ENCODE measurements at regions of chr2 and their contacts with region 1.

Region 1: DNA sequence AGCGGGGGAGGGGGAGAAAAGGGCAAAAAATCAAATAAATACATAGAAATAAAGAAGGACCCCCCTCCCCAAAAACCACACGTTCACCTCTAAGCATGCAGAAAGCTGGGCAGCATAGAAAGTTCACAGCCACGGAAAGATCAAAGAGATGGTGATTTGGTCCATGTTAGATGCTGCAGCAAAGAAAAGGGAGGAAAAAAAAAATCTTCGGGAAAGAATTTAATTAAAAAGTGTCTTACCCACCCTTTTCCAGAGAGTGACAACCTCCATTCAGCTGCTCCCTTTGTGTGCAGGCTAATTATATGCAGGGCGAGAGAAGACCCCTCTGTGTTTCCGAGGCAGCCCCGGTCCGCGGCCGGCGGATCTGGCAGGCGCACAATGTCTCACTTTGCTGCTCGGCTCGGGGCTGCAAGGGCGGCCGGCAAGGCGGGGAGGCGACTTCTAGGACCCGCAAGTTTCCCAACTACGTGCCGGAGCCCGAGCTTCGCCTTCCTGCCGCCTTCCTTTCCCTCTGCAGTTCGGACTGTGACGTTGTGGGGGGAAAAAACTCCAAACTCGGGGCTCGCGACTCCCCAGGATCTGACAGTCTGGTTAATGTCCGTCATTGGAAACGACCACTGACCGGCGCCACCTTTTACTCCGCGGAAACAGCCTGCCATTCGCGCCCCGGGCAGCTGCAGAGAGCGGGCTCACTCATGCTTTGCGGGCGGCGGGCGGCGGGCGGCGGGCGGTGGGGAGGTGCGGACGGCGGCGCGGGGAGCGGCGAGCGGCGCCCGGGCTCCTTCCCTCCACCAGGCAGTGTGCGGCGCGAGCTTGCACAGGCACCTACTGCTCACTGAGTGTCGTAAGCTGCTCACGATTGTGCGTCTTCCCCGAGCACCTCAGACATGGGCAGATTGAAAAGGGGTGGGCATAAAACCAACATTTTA is at the start of gene LRRTM1:
- DNase-seq: no peak
- H3K4me3 ChIP-seq: no peak within 1 kb of the TSS
- H3K27ac ChIP-seq: no peak within 1 kb of the TSS
- H3K4me1 ChIP-seq: no peaks in the 10 kb centered on the region
- H3K27me3 ChIP-seq: no peaks in the 10 kb centered on the region
- CTCF ChIP-seq: no peak
- EP300 ChIP-seq: no peak
- POLR2A ChIP-seq: no peak
- total RNA-seq, gene LRRTM1: 0.25 to 0.66 (median 0.46) TPM in 5 of 7 donors, not detected in the others

Region 2: DNA sequence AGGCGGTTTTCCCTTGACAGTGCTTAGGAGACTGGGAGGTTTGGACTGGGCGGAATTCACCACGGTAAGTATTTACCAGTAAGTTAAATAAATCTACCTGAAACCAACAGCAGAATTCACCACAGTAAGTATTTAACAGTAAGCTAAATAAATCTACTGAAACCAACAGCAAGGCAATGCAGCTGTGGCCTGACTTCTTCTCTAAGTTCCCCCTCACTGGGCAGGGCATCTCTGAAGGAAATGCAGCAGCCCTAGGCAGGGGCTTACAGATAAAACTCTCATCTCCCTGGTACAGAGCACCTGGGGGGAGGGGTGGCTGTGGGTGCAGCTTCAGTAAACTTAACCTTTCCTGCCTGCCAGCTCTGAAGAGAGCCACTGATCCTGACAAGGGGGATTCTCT is 432.9 kb after region 1 on chr2:
- intact Hi-C with region 1: loop called in 1 of 4 experiments (anchors 5 kb)
- DNase-seq: no peak
- H3K4me3 ChIP-seq: no peak overlapping the region
- H3K27ac ChIP-seq: no peak overlapping the region
- H3K4me1 ChIP-seq: no peaks in the 10 kb centered on the region
- H3K27me3 ChIP-seq: no peaks in the 10 kb centered on the region
- CTCF ChIP-seq: no peak
- EP300 ChIP-seq: no peak
- POLR2A ChIP-seq: no peak

Measured in ovary (tissue), 10 donors.